Lower lobe of right lung (tissue), 2 donors: ENCODE measurements at regions of chr19 and their contacts with region 1.

Region 1: GRCh38 chr19:29873024-29873800 is 61.4 kb downstream of the CCNE1 start:
- DNase-seq: peak; percentile 67
- ATAC-seq: peak; percentile 73 to 87
- H3K4me3 ChIP-seq: peak overlapping the region; percentile 48
- H3K27ac ChIP-seq: no peak overlapping the region
- H3K4me1 ChIP-seq: peaks cover 17% of the 10 kb centered on the region
- H3K27me3 ChIP-seq: peaks cover 45% of the 10 kb centered on the region
- CTCF ChIP-seq: peak; percentile 85

Region 2: GRCh38 chr19:29745253-29745652 is 128.0 kb before region 1 on chr19:
- intact Hi-C with region 1: loop called (anchors 10 kb)
- DNase-seq: no peak
- ATAC-seq: no peak
- H3K4me3 ChIP-seq: no peak overlapping the region
- H3K27ac ChIP-seq: no peak overlapping the region
- H3K4me1 ChIP-seq: no peaks in the 10 kb centered on the region
- H3K27me3 ChIP-seq: peaks cover 7% of the 10 kb centered on the region
- CTCF ChIP-seq: no peak

Region 3: DNA sequence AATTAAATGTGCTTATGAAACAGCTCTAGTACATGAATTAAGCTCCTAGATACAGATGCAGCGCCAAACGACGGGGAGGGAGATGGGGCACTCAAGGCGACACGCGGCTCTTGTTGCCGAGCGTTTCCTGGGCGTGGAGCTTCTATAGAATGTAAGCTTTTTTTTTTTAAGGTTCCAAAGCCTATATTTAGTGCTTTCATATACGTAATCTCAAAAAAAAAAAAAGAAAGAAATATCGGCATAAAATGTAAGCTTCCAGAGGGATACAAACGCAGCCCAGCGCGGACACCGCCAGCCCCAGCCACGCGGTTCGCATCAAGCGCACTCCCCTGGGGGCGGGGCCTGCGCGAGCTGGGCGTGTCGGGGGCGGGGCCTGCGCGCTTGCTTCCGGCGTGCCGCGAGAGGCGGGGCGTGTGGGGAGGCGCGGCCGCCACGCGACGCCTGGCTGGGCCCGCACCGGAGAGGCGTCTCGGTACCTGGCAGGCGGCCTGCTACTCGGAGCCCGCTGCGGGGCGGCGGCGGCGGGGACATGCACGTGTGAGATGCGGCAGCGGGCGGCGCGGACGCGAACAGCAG is 68.7 kb after region 1 on chr19 and contains the start of gene URI1:
- intact Hi-C with region 1: no loop called
- DNase-seq: peak; percentile 93
- ATAC-seq: peak; percentile 98 to 99
- H3K4me3 ChIP-seq: peak within 1 kb of the TSS; percentile 94
- H3K27ac ChIP-seq: peak within 1 kb of the TSS; percentile 81
- H3K4me1 ChIP-seq: peaks cover 35% of the 10 kb centered on the region
- H3K27me3 ChIP-seq: no peaks in the 10 kb centered on the region
- CTCF ChIP-seq: no peak
- total RNA-seq, gene URI1: 46.0 TPM